Stomach (tissue), 19 donors: ENCODE measurements at regions of chr3 and their contacts with region 1.

Region 1: DNA sequence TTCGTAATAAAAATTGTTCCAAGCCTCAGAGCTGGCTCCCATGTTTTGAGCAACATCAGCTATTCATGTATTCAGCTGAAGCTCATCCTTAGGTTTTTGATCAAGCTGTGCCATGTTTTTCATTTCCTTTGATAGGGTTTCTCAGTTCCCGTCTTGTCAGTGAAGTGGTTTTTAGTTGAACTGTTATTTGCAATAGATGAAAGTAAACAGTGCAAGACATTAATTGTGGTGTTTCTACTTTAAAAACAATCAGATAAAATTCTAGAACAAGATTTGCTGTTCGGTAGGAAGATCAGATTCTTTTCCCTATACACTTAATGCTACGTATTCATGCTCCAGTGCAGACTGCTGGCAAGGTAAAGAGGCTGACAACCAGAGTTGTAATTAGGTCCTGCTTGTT is 55.5 kb upstream of the SPTSSB start:
- DNase-seq: no peak
- H3K4me3 ChIP-seq: no peak overlapping the region
- H3K27ac ChIP-seq: no peak overlapping the region
- H3K4me1 ChIP-seq: no peaks in the 10 kb centered on the region
- H3K27me3 ChIP-seq: no peaks in the 10 kb centered on the region
- CTCF ChIP-seq: no peak
- EP300 ChIP-seq: no peak
- POLR2A ChIP-seq: no peak

Region 2: GRCh38 chr3:161274719-161275298 is 152.0 kb before region 1 on chr3:
- intact Hi-C with region 1: loop called (anchors 5 kb)
- DNase-seq: peak in 1 of 2 donors; percentile 71
- H3K4me3 ChIP-seq: no peak overlapping the region
- H3K27ac ChIP-seq: no peak overlapping the region
- H3K4me1 ChIP-seq: peaks cover 0 to 8% (median 0%) of the 10 kb centered on the region in 4 donors
- H3K27me3 ChIP-seq: no peaks in the 10 kb centered on the region
- CTCF ChIP-seq: peak in 3 of 7 experiments; percentile 16 to 37 (median 33)
- EP300 ChIP-seq: no peak
- POLR2A ChIP-seq: no peak

Region 3: DNA sequence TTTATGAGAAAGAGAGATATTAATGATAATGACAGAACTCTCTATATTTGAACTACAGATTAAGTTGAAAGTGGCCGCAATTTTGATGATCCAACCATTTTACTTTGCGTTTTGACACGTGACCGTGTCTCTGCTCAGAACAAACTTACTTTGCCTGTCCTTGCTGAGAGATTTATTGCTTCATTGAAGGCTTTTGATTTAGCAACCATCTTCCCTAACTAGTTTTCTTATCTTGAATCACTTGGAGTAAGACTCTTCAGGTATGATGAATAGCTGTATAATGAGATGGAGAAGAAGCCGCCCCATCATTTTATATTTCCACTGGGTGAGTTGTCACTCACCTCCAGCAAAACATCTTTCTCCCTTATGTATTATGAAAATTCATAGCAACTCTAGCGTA is 47.4 kb before region 1 on chr3:
- intact Hi-C with region 1: no loop called
- DNase-seq: no peak
- H3K4me3 ChIP-seq: no peak overlapping the region
- H3K27ac ChIP-seq: no peak overlapping the region
- H3K4me1 ChIP-seq: no peaks in the 10 kb centered on the region
- H3K27me3 ChIP-seq: no peaks in the 10 kb centered on the region
- CTCF ChIP-seq: no peak
- EP300 ChIP-seq: no peak
- POLR2A ChIP-seq: no peak